Activated T-helper 1 cell treated with anti-CD3 and anti-CD28 coated beads, Interleukin-12 subunit alpha, Interleukin-12 subunit beta, Interleukin-2, Interleukin-4 antibody, amounts not matched to agents 30 ng/mL and 10 ng/mL and 1 ng/mL, durations not matched to agents 14 hours and 24 hours and 36 hours (primary cell): ENCODE measurements at regions of chr10 and their contacts with region 1.

Region 1: GRCh38 chr10:128125944-128126764 is at the start of gene MKI67:
- DNase-seq: peak; percentile 88
- H3K4me3 Mint-ChIP-seq: peak within 1 kb of the TSS; percentile 98
- H3K27ac Mint-ChIP-seq: peak within 1 kb of the TSS; percentile 95
- H3K4me1 Mint-ChIP-seq: peaks cover 54% of the 10 kb centered on the region
- H3K27me3 Mint-ChIP-seq: peaks cover 2% of the 10 kb centered on the region
- total RNA-seq, gene MKI67: 141 and 159 TPM in 2 replicates

Region 2: DNA sequence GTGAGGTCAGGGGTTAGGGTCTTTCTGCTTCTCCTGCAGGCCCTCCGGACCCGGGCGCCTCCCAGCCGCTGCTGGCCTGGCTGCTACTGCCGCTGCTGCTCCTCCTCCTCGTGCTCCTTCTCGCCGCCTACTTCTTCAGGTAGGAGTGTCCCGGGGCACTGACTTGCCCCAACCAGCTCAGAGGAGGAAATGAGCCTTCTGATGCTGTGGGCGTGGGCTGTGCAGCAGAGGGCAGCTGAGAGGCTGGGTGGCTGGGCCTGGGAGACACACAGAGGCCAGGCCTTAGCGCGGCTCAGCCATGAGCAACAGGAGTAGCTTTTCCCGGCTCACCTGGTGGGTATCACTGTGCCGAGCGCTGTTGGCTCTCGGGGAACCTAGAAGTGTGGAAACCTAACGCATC is 78.8 kb before region 1 on chr10:
- intact Hi-C with region 1: loop called (anchors 1 kb)
- DNase-seq: peak; percentile 83
- H3K4me3 Mint-ChIP-seq: peak overlapping the region; percentile 94
- H3K27ac Mint-ChIP-seq: peak overlapping the region; percentile 96
- H3K4me1 Mint-ChIP-seq: peaks cover 49% of the 10 kb centered on the region
- H3K27me3 Mint-ChIP-seq: peaks cover 2% of the 10 kb centered on the region

Region 3: GRCh38 chr10:128095753-128096469 is 30.2 kb before region 1 on chr10:
- intact Hi-C with region 1: loop called (anchors 2 kb)
- DNase-seq: no peak
- H3K4me3 Mint-ChIP-seq: no peak overlapping the region
- H3K27ac Mint-ChIP-seq: peak overlapping the region; percentile 65
- H3K4me1 Mint-ChIP-seq: peaks cover 44% of the 10 kb centered on the region
- H3K27me3 Mint-ChIP-seq: no peaks in the 10 kb centered on the region

Region 4: GRCh38 chr10:128180843-128181242 is 54.7 kb after region 1 on chr10:
- intact Hi-C with region 1: loop called (anchors 1 kb)
- DNase-seq: peak; percentile 68
- H3K4me3 Mint-ChIP-seq: peak overlapping the region; percentile 68
- H3K27ac Mint-ChIP-seq: peak overlapping the region; percentile 82
- H3K4me1 Mint-ChIP-seq: peaks cover 62% of the 10 kb centered on the region
- H3K27me3 Mint-ChIP-seq: no peaks in the 10 kb centered on the region

Region 5: GRCh38 chr10:128211953-128212727 is 86.0 kb after region 1 on chr10:
- intact Hi-C with region 1: loop called (anchors 1 kb)
- DNase-seq: peak; percentile 83
- H3K4me3 Mint-ChIP-seq: peak overlapping the region; percentile 86
- H3K27ac Mint-ChIP-seq: peak overlapping the region; percentile 89
- H3K4me1 Mint-ChIP-seq: peaks cover 11% of the 10 kb centered on the region
- H3K27me3 Mint-ChIP-seq: peaks cover 13% of the 10 kb centered on the region